ENCODE measurements at regions of chr2 and their contacts with region 1.

Region 1: DNA sequence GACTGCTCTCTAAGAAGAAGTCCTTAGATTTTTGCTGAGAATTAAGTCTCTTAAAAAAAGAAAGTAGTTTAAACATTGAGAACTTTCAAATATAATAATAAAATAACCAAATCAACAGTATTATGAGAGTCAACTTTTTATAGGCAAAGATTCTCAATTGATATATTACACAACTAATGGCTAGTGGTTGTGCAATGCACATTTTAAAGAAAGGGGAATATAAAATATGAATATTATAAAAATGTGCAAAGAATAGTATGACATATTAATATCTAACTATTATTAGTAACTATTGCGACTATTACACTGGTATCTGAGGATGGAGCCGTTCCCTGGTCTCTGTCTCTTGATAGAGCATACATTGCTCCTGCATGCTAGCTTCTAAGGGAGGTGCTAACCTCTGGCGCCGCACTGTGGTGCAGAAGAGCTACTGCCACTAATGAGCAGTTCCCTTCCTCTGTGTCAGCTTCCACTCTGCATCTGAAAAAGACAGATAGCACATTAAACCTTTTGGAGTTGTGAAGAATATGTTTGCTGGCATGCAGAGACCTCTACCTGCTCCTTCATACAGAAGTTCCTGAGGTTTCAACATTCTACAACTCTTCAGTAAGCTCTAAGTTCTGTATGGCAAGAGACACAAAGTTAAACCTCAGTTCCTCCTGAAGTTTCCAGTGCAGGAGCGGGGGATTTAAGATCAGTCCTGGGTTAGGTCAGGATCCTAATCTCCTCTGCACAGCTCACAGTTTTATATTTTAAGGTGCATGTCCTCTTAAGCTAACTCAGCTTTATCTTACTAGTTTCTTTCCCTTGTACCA is 3.5 kb upstream of the SLC9A2 start:
- DNase-seq: peak; percentile 81
- H3K4me3 Mint-ChIP-seq: no peak overlapping the region
- H3K27ac Mint-ChIP-seq: no peak overlapping the region
- H3K4me1 Mint-ChIP-seq: peaks cover 11% of the 10 kb centered on the region
- H3K27me3 Mint-ChIP-seq: peaks cover 60% of the 10 kb centered on the region

Region 2: GRCh38 chr2:102637358-102637757 is 21.5 kb after region 1 on chr2:
- intact Hi-C with region 1: no loop called
- DNase-seq: no peak
- H3K4me3 Mint-ChIP-seq: no peak overlapping the region
- H3K27ac Mint-ChIP-seq: no peak overlapping the region
- H3K4me1 Mint-ChIP-seq: peaks cover 3% of the 10 kb centered on the region
- H3K27me3 Mint-ChIP-seq: peaks cover 17% of the 10 kb centered on the region

Region 3: GRCh38 chr2:102703748-102704147 is 87.9 kb after region 1 on chr2:
- intact Hi-C with region 1: loop called (anchors 2 kb)
- DNase-seq: no peak
- H3K4me3 Mint-ChIP-seq: no peak overlapping the region
- H3K27ac Mint-ChIP-seq: no peak overlapping the region
- H3K4me1 Mint-ChIP-seq: peaks cover 2% of the 10 kb centered on the region
- H3K27me3 Mint-ChIP-seq: peaks cover 14% of the 10 kb centered on the region